ENCODE measurements at regions of chr5 and their contacts with region 1.

Region 1: DNA sequence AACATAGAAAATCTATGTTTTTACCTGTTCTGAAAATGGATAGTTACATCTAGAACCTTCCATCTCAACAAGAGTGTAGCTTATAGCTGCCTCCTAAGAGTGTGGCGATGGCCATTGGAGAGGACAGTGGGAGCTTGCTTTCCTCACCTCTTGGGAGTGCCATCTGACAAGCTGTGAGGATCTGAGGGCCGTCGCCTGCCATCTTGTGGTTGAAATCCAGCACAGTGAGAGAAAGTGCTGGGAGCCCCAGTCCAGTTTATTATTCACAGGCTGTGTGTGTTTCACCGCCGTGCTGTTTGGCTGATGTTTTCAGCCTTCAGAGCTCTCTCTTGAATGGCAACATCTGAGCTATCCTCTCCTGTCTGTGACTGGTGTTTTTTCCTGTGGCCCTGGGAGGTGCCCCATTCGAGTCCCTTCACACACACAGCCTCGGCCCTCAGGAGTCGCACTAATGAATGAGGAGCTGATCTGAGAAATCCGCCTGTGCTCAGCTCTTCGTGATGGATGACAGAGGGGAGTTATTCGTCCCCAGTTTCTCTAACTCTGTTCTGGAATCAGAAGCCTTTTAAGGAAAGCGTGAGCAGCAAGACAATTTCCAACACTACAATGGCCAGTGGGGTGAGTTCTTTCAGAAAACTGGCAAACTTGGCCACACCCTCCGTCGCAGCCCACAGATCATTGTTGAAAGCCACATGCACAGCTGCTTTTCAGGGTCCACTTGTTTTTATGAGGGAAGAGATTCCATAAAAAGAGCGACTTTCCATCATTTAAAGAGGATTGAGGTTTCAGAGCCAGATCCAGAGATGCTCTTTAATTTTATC is 170.3 kb downstream of the PDZD2 start:
- DNase-seq: peak; percentile 56 to 70 (median 59)
- ATAC-seq: peak; percentile 95 to 98 (median 95)
- H3K4me3 ChIP-seq: no peak overlapping the region
- H3K27ac ChIP-seq: no peak overlapping the region
- H3K4me1 ChIP-seq: no peaks in the 10 kb centered on the region
- H3K27me3 ChIP-seq: no peaks in the 10 kb centered on the region
- CTCF ChIP-seq: peak; percentile 60 to 81 (median 72)
- POLR2A ChIP-seq: no peak

Region 2: DNA sequence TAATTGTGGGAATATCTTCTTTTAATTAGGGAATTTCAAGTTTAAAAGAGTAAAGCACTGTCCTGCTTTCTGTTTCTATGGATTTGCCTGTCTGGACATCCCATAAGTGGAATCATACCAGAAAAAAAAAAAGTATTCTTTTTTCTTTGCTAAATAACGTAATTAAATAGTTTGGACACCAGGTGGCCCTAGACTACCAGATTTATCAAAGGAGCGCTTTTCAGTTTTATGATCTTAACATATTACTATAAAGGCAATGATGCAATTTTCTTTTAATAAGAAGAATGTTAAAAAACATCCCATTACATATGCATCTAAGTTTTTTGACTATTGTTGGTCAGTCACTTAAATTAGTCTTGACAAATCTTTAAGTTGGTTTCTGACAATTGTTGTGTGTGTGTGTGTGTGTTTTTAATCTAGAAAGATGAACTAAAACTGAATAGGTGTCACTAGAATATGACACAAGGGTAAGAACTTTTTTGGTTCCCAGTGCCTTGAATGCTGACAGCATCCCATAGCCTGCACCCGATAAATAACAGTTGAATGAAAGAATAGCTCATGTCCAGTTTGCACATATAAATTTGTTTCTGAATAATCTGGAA is 227.7 kb before region 1 on chr5:
- intact Hi-C with region 1: loop called (anchors 5 to 10 kb)
- DNase-seq: no peak
- ATAC-seq: peak; percentile 21 to 62 (median 52)
- H3K4me3 ChIP-seq: no peak overlapping the region
- H3K27ac ChIP-seq: no peak overlapping the region
- H3K4me1 ChIP-seq: no peaks in the 10 kb centered on the region
- H3K27me3 ChIP-seq: no peaks in the 10 kb centered on the region
- CTCF ChIP-seq: peak; percentile 38 to 55 (median 50)
- POLR2A ChIP-seq: no peak

Region 3: DNA sequence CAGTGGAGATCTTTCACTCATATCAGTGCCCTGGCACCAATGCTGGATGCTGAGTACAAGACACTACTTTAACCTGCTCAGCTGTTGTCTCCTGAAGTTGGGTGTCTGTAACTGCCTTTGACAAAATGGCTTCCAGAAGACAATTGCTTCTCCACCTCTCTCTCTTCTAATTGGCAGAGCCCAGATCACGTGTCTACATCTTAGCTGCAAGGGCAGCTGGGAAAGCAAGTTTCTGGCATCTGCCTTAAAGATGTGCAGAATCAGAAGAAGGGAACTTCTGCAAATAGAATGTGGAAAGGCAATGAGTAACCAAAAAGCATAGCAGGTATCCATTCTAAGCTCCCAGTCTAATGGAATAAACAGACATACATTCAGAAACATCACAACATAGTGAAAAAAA is 89.3 kb before region 1 on chr5:
- intact Hi-C with region 1: no loop called
- DNase-seq: no peak
- ATAC-seq: no peak
- H3K4me3 ChIP-seq: no peak overlapping the region
- H3K27ac ChIP-seq: no peak overlapping the region
- H3K4me1 ChIP-seq: no peaks in the 10 kb centered on the region
- H3K27me3 ChIP-seq: no peaks in the 10 kb centered on the region
- CTCF ChIP-seq: no peak
- POLR2A ChIP-seq: no peak